Activated CD8-positive, alpha-beta T cell treated with anti-CD3 and anti-CD28 coated beads for 36 hours (primary cell): ENCODE measurements at regions of chr11 and their contacts with region 1.

Region 1: DNA sequence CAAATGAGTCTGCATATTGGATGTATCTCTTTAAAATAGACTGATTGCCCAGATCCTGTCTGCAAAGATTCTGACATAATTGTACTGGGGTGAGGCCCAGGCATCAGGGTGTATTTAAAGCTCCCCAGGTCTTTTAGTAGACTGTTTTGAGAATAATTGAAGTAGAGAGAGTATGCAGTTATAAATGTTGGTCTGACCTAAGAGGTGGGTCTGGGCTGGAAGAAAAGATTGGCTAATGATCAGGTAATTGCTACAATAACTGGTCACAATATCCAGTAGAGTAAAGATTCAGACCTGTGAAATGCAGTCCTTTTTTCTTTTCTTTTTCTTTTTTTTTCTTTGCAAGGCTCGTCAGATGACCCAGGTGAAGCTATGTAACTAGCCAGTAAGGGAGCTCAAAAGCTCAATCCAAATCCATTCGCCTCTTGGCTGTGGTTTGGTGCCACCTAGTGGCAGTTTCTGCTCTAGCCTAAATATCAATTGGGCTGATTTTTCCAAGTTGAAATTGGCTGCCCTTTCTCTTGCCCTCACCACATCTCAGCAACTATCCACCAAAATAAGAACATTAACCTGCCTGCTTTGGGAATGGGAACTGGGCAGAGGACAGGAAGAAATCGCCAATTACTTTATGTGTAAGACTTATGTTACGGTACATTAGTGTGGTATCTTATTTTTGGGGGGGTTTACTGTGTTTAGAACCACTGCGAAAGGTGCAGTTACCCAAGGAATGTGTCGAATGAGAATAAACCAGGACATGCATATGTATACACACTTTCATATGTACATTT is 45.9 kb downstream of the ZNF143 start:
- DNase-seq: peak; percentile 89
- ATAC-seq: peak; percentile 83
- H3K4me3 Mint-ChIP-seq: no peak overlapping the region
- H3K27ac Mint-ChIP-seq: no peak overlapping the region
- H3K4me1 Mint-ChIP-seq: peaks cover 8% of the 10 kb centered on the region
- H3K27me3 Mint-ChIP-seq: no peaks in the 10 kb centered on the region
- CTCF ChIP-seq: peak; percentile 82

Region 2: DNA sequence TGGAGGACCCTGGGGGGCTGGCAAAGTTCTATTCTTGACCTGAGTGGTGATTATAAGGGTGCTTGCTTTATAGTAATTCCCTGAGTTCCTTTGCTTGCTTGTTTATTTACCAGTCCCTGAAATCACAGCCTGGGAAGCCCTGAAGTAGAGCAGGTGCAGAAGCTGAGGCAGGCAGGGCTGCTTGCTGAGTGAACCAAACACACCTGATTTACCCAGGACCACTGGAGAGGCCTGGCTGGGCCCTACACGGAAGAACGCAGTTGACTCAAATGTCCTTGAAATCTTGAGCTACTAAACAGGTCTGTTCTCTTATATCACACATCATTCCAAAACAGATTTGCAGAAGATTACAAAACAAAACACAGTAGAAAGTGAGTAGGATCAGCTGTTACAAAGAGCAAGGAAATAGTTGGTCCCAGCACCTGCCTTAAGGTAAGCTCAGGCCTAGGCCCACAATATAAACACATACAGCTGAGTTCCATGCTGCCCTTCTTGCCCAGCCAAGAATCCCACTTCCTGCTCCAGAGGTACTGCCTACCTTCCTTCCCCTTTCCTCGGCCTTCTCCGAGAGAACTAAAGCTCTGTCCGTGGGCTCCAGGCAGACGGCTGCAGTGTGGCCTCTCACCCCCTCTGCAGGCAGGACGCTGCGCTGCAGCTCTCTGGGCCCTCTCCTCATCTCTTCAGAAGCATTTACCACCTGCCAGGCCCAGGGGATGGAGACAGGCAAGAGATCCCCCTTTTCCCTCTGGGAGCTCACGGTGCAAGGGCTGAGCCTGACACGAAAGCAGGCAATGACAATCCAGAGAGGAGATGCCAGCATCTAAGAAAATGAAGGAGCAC is 369.2 kb before region 1 on chr11:
- CTCF ChIA-PET with region 1: interaction called, 15 read pairs
- POLR2A ChIA-PET with region 1: no interaction called
- intact Hi-C with region 1: no loop called
- DNase-seq: peak; percentile 81
- ATAC-seq: peak; percentile 99
- H3K4me3 Mint-ChIP-seq: no peak overlapping the region
- H3K27ac Mint-ChIP-seq: no peak overlapping the region
- H3K4me1 Mint-ChIP-seq: peaks cover 8% of the 10 kb centered on the region
- H3K27me3 Mint-ChIP-seq: no peaks in the 10 kb centered on the region
- CTCF ChIP-seq: peak; percentile 91

Region 3: DNA sequence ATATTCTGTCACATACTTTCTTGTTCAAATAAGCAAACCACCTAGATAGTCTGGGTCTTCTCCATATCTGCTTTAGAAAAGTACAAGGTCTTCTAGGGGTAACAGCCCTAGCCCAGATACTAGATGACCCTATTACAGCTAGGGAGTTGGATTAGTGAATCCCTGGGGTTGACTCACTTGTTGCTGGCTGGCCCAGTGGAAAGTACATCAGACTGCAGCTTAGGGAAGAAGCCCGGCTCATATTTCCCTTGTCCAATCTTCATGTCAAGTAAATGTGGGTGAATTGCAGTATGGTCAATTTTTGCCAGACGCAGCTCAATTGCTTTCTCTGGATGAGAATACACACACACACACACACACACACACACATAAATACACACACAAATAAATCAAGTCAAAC is 336.2 kb before region 1 on chr11:
- CTCF ChIA-PET with region 1: interaction called, 16 read pairs
- POLR2A ChIA-PET with region 1: no interaction called
- intact Hi-C with region 1: loop called (anchors 10 kb)
- DNase-seq: no peak
- ATAC-seq: no peak
- H3K4me3 Mint-ChIP-seq: no peak overlapping the region
- H3K27ac Mint-ChIP-seq: no peak overlapping the region
- H3K4me1 Mint-ChIP-seq: peaks cover 11% of the 10 kb centered on the region
- H3K27me3 Mint-ChIP-seq: no peaks in the 10 kb centered on the region
- CTCF ChIP-seq: no peak

Region 4: DNA sequence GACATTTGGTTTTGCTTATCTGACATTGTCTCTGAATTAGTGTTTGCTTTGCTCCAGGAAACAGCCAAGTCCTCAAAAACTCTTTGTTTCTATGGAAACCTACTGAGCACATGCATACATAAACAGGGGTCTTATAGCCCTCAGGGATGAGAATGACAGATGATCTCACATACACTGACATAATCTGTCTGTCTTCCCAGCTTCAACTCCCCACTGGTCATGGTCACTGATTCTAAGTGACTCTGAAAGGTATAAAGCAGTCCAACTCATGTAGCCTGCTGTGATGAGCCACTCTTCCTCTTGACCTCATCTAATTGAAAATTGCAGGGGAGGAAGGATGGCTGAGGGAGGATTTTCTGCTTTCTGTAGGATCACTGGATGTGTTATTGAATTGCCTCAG is 33.3 kb before region 1 on chr11:
- CTCF ChIA-PET with region 1: interaction called, 20 read pairs
- POLR2A ChIA-PET with region 1: no interaction called
- intact Hi-C with region 1: no loop called
- DNase-seq: no peak
- ATAC-seq: no peak
- H3K4me3 Mint-ChIP-seq: no peak overlapping the region
- H3K27ac Mint-ChIP-seq: no peak overlapping the region
- H3K4me1 Mint-ChIP-seq: peaks cover 5% of the 10 kb centered on the region
- H3K27me3 Mint-ChIP-seq: no peaks in the 10 kb centered on the region
- CTCF ChIP-seq: no peak

Region 5: DNA sequence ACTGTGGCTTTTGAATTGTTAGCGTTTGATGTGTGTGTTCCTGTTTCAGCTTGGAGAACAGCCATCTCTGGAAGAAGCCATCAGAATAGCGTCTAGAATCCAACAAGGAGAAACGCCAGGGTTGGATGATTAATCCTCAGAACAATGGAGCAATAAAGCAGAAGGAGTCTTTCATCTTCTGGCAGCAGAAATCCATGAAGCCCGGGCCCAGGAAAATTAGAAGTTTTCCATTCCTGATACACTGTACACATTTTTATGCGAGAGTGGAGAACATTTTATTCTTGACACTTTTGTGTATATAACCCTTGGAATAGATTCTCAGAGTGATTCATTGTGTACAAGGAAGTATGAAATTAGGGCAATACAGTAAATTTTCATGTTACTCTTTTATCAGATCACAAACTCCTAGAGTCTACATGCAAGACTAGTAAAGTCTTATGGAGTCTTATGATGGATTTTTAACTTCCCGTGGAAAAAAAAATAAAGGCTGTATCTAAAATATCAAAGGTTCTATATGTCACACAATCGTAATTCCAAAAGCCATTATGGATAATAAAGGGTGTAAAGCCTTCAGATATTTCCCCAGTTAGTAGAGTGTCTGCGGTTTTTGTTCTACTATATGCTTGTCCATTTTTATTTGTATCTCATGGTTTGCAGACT is 20.9 kb after region 1 on chr11:
- CTCF ChIA-PET with region 1: interaction called, 18 read pairs
- POLR2A ChIA-PET with region 1: interaction called, 3 read pairs
- intact Hi-C with region 1: no loop called
- DNase-seq: no peak
- ATAC-seq: no peak
- H3K4me3 Mint-ChIP-seq: no peak overlapping the region
- H3K27ac Mint-ChIP-seq: no peak overlapping the region
- H3K4me1 Mint-ChIP-seq: no peaks in the 10 kb centered on the region
- H3K27me3 Mint-ChIP-seq: no peaks in the 10 kb centered on the region
- CTCF ChIP-seq: no peak